AG04450 (cell line): ENCODE measurements at regions of chr5 and their contacts with region 1.

Region 1: GRCh38 chr5:148730943-148731861 is 76.9 kb upstream of the HTR4 start:
- DNase-seq: peak; percentile 72
- H3K4me3 ChIP-seq: no peak overlapping the region; the same call in 1 of the 2 replicates
- H3K27ac ChIP-seq: no peak overlapping the region
- H3K27me3 ChIP-seq: peaks cover 3% of the 10 kb centered on the region
- CTCF ChIP-seq: peak; percentile 84

Region 2: DNA sequence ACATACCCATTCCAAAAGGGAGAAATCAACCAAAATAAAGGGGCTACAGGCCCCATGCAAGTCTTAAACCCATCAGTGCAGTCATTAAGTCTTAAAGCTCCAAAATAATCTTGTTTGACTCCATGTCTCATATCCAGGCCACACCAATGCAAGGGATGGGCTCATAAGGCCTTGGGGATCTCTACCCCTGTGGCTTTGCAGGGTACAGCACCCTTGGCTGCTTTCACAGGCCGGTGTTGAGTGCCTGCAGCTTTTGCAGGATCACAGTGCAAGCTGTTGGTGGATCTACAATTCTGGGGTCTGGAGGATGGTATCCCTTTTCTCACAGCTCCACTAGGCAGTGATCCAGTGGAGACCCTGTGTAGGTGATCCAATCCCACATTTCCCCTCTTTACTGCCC is 567.9 kb before region 1 on chr5:
- CTCF ChIA-PET with region 1: interaction called, 10 read pairs
- POLR2A ChIA-PET with region 1: no interaction called
- DNase-seq: no peak
- H3K4me3 ChIP-seq: no peak overlapping the region
- H3K27ac ChIP-seq: no peak overlapping the region
- H3K27me3 ChIP-seq: no peaks in the 10 kb centered on the region
- CTCF ChIP-seq: no peak

Region 3: GRCh38 chr5:148403344-148403743 is 327.9 kb before region 1 on chr5:
- CTCF ChIA-PET with region 1: interaction called, 48 read pairs
- POLR2A ChIA-PET with region 1: no interaction called
- DNase-seq: no peak
- H3K4me3 ChIP-seq: no peak overlapping the region
- H3K27ac ChIP-seq: no peak overlapping the region
- H3K27me3 ChIP-seq: no peaks in the 10 kb centered on the region
- CTCF ChIP-seq: no peak

Region 4: DNA sequence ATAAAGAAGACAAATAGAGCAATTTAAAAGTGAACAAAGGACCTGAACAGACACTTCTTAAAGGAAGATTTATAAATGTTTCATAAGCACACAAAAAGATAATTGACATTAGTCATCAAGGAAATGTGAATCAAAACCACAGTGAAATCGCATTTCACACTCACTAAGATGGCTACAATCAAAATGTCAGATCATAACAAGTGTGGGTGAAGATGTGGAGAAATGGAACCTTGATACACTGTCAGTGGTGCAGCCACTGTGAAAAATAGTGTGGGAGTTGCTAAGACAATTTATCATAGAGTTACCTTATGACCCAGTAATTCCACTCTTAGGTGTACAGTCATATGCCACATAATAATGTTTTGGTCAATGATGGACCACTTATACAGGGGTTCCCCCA is 22.3 kb before region 1 on chr5:
- CTCF ChIA-PET with region 1: interaction called, 28 read pairs
- POLR2A ChIA-PET with region 1: no interaction called
- DNase-seq: no peak
- H3K4me3 ChIP-seq: no peak overlapping the region
- H3K27ac ChIP-seq: no peak overlapping the region
- H3K27me3 ChIP-seq: peaks cover 3% of the 10 kb centered on the region
- CTCF ChIP-seq: no peak

Region 5: GRCh38 chr5:148826053-148826738 is 95.0 kb after region 1 on chr5 and contains the start of gene ADRB2:
- CTCF ChIA-PET with region 1: interaction called, 12 read pairs
- POLR2A ChIA-PET with region 1: no interaction called
- DNase-seq: peak; percentile 79
- H3K4me3 ChIP-seq: peak within 1 kb of the TSS; percentile 85
- H3K27ac ChIP-seq: peak within 1 kb of the TSS; percentile 70
- H3K27me3 ChIP-seq: no peaks in the 10 kb centered on the region
- CTCF ChIP-seq: no peak
- polyA plus RNA-seq, gene ADRB2: 0.63 and 0.65 TPM in 2 replicates

Region 6: GRCh38 chr5:149024477-149024876 is 293.3 kb after region 1 on chr5:
- CTCF ChIA-PET with region 1: interaction called, 1,022 read pairs
- POLR2A ChIA-PET with region 1: no interaction called
- DNase-seq: no peak
- H3K4me3 ChIP-seq: no peak overlapping the region
- H3K27ac ChIP-seq: no peak overlapping the region
- H3K27me3 ChIP-seq: no peaks in the 10 kb centered on the region
- CTCF ChIP-seq: no peak